CD8-positive, alpha-beta T cell (primary cell): ENCODE measurements at regions of chr17 and their contacts with region 1.

Region 1: GRCh38 chr17:64262417-64263260 is at the start of gene TEX2:
- DNase-seq: peak; percentile 39 to 87 (median 67)
- ATAC-seq: peak; percentile 32
- H3K4me3 ChIP-seq: peak within 1 kb of the TSS; percentile 64 to 82
- H3K4me3 Mint-ChIP-seq: peak within 1 kb of the TSS; percentile 89
- H3K27ac ChIP-seq: peak within 1 kb of the TSS; percentile 67 to 74
- H3K27ac Mint-ChIP-seq: peak within 1 kb of the TSS; percentile 93
- H3K4me1 ChIP-seq: peaks cover 21% of the 10 kb centered on the region
- H3K4me1 Mint-ChIP-seq: peaks cover 37% of the 10 kb centered on the region
- H3K27me3 ChIP-seq: no peaks in the 10 kb centered on the region
- H3K27me3 Mint-ChIP-seq: no peaks in the 10 kb centered on the region
- CTCF ChIP-seq: no peak
- total RNA-seq, gene TEX2: 4.8 to 5.6 TPM

Region 2: GRCh38 chr17:63842540-63843386 is 419.9 kb before region 1 on chr17 and contains the start of gene SMARCD2:
- CTCF ChIA-PET with region 1: no interaction called
- POLR2A ChIA-PET with region 1: no interaction called
- intact Hi-C with region 1: loop called (anchors 1 to 2 kb)
- DNase-seq: peak; percentile 99
- ATAC-seq: peak; percentile 91
- H3K4me3 ChIP-seq: peak within 1 kb of the TSS; percentile 86 to 95
- H3K4me3 Mint-ChIP-seq: peak within 1 kb of the TSS; percentile 92
- H3K27ac ChIP-seq: peak within 1 kb of the TSS; percentile 88 to 95
- H3K27ac Mint-ChIP-seq: peak within 1 kb of the TSS; percentile 92
- H3K4me1 ChIP-seq: peaks cover 43% of the 10 kb centered on the region
- H3K4me1 Mint-ChIP-seq: peaks cover 30% of the 10 kb centered on the region
- H3K27me3 ChIP-seq: no peaks in the 10 kb centered on the region
- H3K27me3 Mint-ChIP-seq: no peaks in the 10 kb centered on the region
- CTCF ChIP-seq: no peak
- total RNA-seq, gene SMARCD2: 121 TPM

Region 3: DNA sequence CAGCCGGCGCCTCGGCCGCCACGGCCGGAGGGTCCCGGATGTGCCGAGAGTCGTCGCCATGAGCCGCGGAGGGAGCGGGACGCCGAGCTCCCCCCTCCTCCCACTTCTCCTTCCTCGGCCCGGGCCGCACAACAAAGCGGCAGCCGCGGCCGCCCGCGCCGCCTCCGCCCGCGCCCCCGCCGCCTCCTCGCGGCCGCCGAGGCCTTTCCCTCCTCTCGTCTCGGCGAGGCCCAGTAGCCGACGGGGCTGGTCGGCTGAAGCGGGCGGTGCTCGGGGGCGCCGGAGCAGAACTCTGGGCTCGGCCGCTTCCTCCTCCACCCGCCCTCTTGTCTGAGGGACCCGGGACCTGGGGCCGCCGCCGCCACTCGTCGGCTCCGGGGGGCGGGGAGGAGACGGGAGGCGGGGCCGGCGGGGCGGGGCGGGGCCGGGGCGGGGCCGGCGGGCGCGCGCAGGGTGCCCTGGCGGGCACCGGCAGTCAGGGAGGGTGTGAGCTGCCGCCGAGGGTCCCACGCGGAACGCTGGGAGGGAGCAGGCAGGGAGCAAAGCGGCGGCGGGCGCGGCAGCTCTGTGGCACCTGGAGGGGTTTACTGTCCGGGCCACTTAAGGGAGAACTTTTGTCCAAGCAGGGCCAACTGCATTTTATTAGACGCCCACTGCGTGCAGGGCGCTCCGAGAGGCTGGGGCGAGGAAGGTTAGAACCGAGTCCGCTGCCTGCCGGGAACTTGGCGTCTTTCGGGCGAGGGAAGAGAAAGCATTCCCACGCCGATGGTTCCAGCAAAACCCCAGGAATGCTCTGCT is 399.5 kb after region 1 on chr17 and contains the start of gene SMURF2:
- CTCF ChIA-PET with region 1: no interaction called
- POLR2A ChIA-PET with region 1: no interaction called
- intact Hi-C with region 1: loop called in 1 of 2 experiments (anchors 5 kb)
- DNase-seq: peak; percentile 63 to 90 (median 80)
- ATAC-seq: peak; percentile 90
- H3K4me3 ChIP-seq: peak within 1 kb of the TSS; percentile 71 to 79
- H3K4me3 Mint-ChIP-seq: peak within 1 kb of the TSS; percentile 98
- H3K27ac ChIP-seq: peak within 1 kb of the TSS; percentile 56 to 63
- H3K27ac Mint-ChIP-seq: peak within 1 kb of the TSS; percentile 95
- H3K4me1 ChIP-seq: peaks cover 31% of the 10 kb centered on the region
- H3K4me1 Mint-ChIP-seq: peaks cover 44% of the 10 kb centered on the region
- H3K27me3 ChIP-seq: no peaks in the 10 kb centered on the region
- H3K27me3 Mint-ChIP-seq: no peaks in the 10 kb centered on the region
- CTCF ChIP-seq: no peak
- total RNA-seq, gene SMURF2: 27.3 to 28.1 TPM

Region 4: DNA sequence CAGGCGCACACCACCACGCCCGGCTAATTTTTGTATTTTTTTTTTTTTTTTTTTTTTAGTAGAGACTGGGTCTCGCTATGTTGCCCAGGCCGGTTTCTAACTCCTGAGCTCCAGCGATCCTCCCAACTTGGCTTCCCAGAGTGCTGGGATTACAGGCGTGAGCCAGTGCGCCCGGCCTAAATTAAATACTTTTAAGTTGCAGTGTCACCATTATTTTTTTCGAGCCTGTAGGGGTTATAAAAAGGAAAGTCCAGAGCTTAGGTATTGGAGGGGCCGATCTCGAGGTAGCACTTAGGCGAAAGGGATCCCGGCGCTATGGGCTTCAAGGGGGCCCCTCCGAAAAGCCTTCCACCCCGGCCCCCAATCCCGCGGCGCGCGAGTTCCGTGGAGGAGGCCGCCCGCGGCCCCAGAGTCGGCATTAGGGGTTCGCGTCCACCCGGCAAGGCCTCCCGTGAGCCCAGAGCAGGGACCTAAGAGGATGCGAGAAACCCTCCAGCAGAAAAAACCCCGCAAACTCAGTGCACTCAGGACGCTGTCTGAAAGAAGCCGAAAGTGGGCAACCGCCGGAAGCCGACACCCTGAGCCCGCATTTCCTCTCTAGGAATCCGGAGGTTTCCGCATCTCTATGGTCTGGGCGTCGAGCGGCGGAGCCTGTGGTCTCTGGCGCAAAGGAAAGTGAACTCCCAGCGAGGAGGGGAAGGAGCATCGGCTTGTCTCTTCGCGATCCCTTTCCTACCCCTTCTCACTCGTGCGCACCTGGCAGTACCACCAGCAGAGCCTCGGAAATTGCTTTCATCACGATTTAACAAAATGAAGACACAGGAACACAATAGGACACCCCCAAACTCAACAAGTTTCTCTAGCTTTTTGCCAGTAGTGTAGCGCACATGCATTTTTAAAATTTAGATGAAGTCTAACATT is 860.5 kb after region 1 on chr17:
- CTCF ChIA-PET with region 1: no interaction called
- POLR2A ChIA-PET with region 1: no interaction called
- intact Hi-C with region 1: loop called in 1 of 2 experiments (anchors 2 kb)
- DNase-seq: peak; percentile 70 to 94 (median 81)
- ATAC-seq: peak; percentile 96
- H3K4me3 ChIP-seq: peak overlapping the region; percentile 40 to 70
- H3K4me3 Mint-ChIP-seq: peak overlapping the region; percentile 87
- H3K27ac ChIP-seq: peak overlapping the region; percentile 46 to 82
- H3K27ac Mint-ChIP-seq: peak overlapping the region; percentile 98
- H3K4me1 ChIP-seq: peaks cover 6% of the 10 kb centered on the region
- H3K4me1 Mint-ChIP-seq: peaks cover 14% of the 10 kb centered on the region
- H3K27me3 ChIP-seq: no peaks in the 10 kb centered on the region
- H3K27me3 Mint-ChIP-seq: peaks cover 5% of the 10 kb centered on the region
- CTCF ChIP-seq: no peak